Endothelial cell of umbilical vein (primary cell): ENCODE measurements at regions of chr11 and their contacts with region 1.

Region 1: GRCh38 chr11:110362971-110363509 is 66.6 kb upstream of the RDX start:
- DNase-seq: peak; percentile 95
- H3K4me3 ChIP-seq: peak overlapping the region in 1 of 3 experiments; percentile 2
- H3K27ac ChIP-seq: peak overlapping the region; percentile 85
- H3K4me1 ChIP-seq: peaks cover 28% of the 10 kb centered on the region
- H3K27me3 ChIP-seq: no peaks in the 10 kb centered on the region
- CTCF ChIP-seq: no peak
- POLR2A ChIP-seq: no peak

Region 2: GRCh38 chr11:110086892-110087309 is 276.1 kb before region 1 on chr11:
- CTCF ChIA-PET with region 1: no interaction called
- POLR2A ChIA-PET with region 1: no interaction called
- dilution Hi-C with region 1: no loop called
- intact Hi-C with region 1: no loop called
- DNase-seq: peak; percentile 30
- H3K4me3 ChIP-seq: no peak overlapping the region
- H3K27ac ChIP-seq: no peak overlapping the region
- H3K4me1 ChIP-seq: peaks cover 2% of the 10 kb centered on the region
- H3K27me3 ChIP-seq: peaks cover 2 to 3% of the 10 kb centered on the region in 2 experiments
- CTCF ChIP-seq: no peak
- POLR2A ChIP-seq: no peak

Region 3: GRCh38 chr11:110235966-110236365 is 127.1 kb before region 1 on chr11:
- CTCF ChIA-PET with region 1: interaction called, 15 read pairs
- POLR2A ChIA-PET with region 1: no interaction called
- dilution Hi-C with region 1: no loop called
- intact Hi-C with region 1: no loop called
- DNase-seq: peak; percentile 37
- H3K4me3 ChIP-seq: no peak overlapping the region
- H3K27ac ChIP-seq: no peak overlapping the region
- H3K4me1 ChIP-seq: peaks cover 23% of the 10 kb centered on the region
- H3K27me3 ChIP-seq: no peaks in the 10 kb centered on the region
- CTCF ChIP-seq: no peak
- POLR2A ChIP-seq: no peak

Region 4: DNA sequence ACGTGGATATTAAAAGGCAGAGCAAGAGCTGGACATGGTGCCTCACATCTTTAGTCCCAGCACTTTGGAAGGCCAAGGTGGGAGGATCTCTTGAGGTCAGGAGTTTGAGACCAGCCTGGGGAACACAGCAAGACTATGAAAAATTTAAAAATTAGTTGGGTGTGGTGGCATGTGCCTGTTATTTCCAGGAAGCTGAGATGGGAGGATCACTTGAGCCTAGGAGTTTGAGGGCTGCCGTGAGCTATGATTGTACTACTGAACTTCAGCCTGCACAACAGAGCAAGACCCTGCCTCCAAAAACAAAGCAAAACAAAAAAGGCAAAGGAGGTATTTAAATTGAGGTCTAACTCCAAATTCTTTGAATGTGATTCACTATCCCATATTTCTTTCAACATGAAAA is 90.1 kb before region 1 on chr11:
- CTCF ChIA-PET with region 1: interaction called, 14 read pairs
- POLR2A ChIA-PET with region 1: no interaction called
- dilution Hi-C with region 1: no loop called
- intact Hi-C with region 1: no loop called
- DNase-seq: no peak
- H3K4me3 ChIP-seq: no peak overlapping the region
- H3K27ac ChIP-seq: no peak overlapping the region
- H3K4me1 ChIP-seq: no peaks in the 10 kb centered on the region
- H3K27me3 ChIP-seq: no peaks in the 10 kb centered on the region
- CTCF ChIP-seq: no peak
- POLR2A ChIP-seq: no peak

Region 5: GRCh38 chr11:110296226-110297075 is 66.6 kb before region 1 on chr11 and contains the start of gene RDX:
- CTCF ChIA-PET with region 1: interaction called, 19 read pairs
- POLR2A ChIA-PET with region 1: interaction called, 3 read pairs
- dilution Hi-C with region 1: no loop called
- intact Hi-C with region 1: loop called (anchors 1 kb)
- DNase-seq: peak; percentile 78
- H3K4me3 ChIP-seq: peak within 1 kb of the TSS; percentile 94 to 96 (median 95)
- H3K27ac ChIP-seq: peak within 1 kb of the TSS; percentile 96
- H3K4me1 ChIP-seq: peaks cover 31% of the 10 kb centered on the region
- H3K27me3 ChIP-seq: no peaks in the 10 kb centered on the region
- CTCF ChIP-seq: peak in 1 of 2 donors; percentile 1
- POLR2A ChIP-seq: peak; percentile 75
- total RNA-seq, gene RDX: 239 and 280 TPM in 2 replicates

Region 6: DNA sequence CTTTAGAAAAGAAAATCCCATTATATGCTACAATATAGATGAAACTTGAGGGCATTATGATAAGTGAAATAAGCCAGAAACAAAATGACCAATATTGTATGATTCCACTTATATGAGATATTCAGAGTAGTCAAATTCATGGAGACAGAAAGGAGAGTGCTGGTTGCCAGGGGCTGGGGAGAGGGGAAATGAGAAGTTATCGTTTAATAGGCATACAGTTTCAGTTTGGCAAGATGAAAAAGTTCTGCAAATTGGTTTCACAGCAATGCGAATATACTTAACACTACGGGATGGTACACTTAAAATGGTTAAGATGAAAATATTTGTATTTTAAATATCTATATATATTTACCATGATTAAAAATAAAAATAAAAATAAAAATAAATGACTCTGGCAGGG is 35.5 kb before region 1 on chr11:
- CTCF ChIA-PET with region 1: interaction called, 13 read pairs
- POLR2A ChIA-PET with region 1: interaction called, 12 read pairs
- dilution Hi-C with region 1: no loop called
- intact Hi-C with region 1: loop called (anchors 1 kb)
- DNase-seq: no peak
- H3K4me3 ChIP-seq: no peak overlapping the region
- H3K27ac ChIP-seq: no peak overlapping the region
- H3K4me1 ChIP-seq: peaks cover 17% of the 10 kb centered on the region
- H3K27me3 ChIP-seq: no peaks in the 10 kb centered on the region
- CTCF ChIP-seq: no peak
- POLR2A ChIP-seq: no peak

Region 7: DNA sequence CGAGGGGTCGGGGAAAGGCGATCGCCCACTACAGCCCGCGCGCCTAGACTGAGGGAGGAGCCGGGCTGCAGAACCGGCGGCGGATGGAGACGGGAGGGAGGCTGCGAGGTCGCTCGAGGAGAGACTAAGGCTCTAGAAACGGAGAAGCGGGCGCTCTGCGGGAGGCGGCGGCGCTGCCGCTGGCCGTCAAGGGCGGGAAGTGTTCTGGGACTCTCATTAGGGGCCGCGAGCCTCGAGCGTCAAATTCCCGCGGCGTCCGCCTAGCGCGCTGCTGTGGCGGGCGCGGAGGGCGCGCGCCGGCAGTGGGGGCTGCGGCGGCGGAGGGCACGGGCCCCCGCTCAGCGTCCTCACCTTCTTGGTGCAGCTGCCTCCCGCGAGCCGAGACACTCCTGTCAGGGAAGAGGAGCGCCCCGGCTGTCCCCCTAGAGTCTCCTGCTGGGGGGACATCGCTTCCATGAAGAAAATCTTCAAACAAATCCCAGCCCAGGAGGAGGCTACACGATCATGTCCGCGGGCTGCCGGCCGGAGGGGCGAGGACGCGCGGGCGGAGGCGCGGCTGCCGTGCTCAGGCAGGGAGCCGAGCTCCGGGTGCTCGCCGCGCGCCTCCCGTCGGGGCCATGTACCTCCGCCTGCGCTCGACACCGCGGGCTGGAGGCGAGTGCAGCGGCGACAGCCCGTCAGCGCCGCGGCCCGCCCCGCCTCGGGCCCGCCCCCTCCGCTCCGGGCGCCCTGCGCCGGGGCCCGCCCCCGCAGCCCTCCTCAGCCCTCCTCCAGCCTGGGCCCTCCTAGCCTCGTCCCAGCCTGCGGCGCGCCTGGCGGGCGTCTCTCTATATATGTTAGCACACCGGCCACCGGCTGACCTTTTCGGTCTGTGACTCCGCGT is 349.0 kb after region 1 on chr11 and contains the start of gene ARHGAP20:
- CTCF ChIA-PET with region 1: no interaction called
- POLR2A ChIA-PET with region 1: no interaction called
- dilution Hi-C with region 1: no loop called
- intact Hi-C with region 1: no loop called
- DNase-seq: peak; percentile 62
- H3K4me3 ChIP-seq: peak within 1 kb of the TSS; percentile 41 to 55 (median 55)
- H3K27ac ChIP-seq: no peak within 1 kb of the TSS
- H3K4me1 ChIP-seq: peaks cover 21% of the 10 kb centered on the region
- H3K27me3 ChIP-seq: no peaks in the 10 kb centered on the region
- CTCF ChIP-seq: no peak
- POLR2A ChIP-seq: peak; percentile 25
- total RNA-seq, gene ARHGAP20: 1.1 and 1.4 TPM in 2 replicates